ENCODE measurements at regions of chr1 and their contacts with region 1.

Region 1: GRCh38 chr1:149886396-149887195 is 12.8 kb upstream of the BOLA1 start:
- DNase-seq: peak; percentile 88
- H3K4me3 ChIP-seq: peak overlapping the region; percentile 73 to 88
- H3K27ac ChIP-seq: peak overlapping the region; percentile 98 to 100
- H3K4me1 ChIP-seq: peaks cover 8 to 19% of the 10 kb centered on the region in 2 experiments; a peak in 3 of 4 replicates
- H3K27me3 ChIP-seq: no peaks in the 10 kb centered on the region
- CTCF ChIP-seq: no peak
- EP300 ChIP-seq: peak in 1 of 2 experiments; percentile 30; a peak in 1 of 4 replicates
- RAD21 ChIP-seq: no peak

Region 2: GRCh38 chr1:149844101-149844500 is 42.5 kb before region 1 on chr1:
- CTCF ChIA-PET with region 1: interaction called, 5 read pairs
- POLR2A ChIA-PET with region 1: interaction called, 23 read pairs
- DNase-seq: no peak
- H3K4me3 ChIP-seq: peak overlapping the region; percentile 66 to 73
- H3K27ac ChIP-seq: peak overlapping the region; percentile 59 to 87
- H3K4me1 ChIP-seq: peaks cover 11 to 36% of the 10 kb centered on the region in 2 experiments; a peak in 3 of 4 replicates
- H3K27me3 ChIP-seq: no peaks in the 10 kb centered on the region
- CTCF ChIP-seq: no peak
- EP300 ChIP-seq: no peak
- RAD21 ChIP-seq: no peak

Region 3: GRCh38 chr1:149899460-149900293 is 13.1 kb after region 1 on chr1 and contains the start of gene BOLA1:
- CTCF ChIA-PET with region 1: interaction called, 8 read pairs
- POLR2A ChIA-PET with region 1: interaction called, 34 read pairs
- DNase-seq: peak; percentile 91
- H3K4me3 ChIP-seq: peak within 1 kb of the TSS; percentile 57 to 68
- H3K27ac ChIP-seq: peak within 1 kb of the TSS; percentile 67 to 94
- H3K4me1 ChIP-seq: peaks cover 0 to 16% of the 10 kb centered on the region in 2 experiments; a peak in 1 of 4 replicates
- H3K27me3 ChIP-seq: no peaks in the 10 kb centered on the region
- CTCF ChIP-seq: no peak
- EP300 ChIP-seq: no peak
- RAD21 ChIP-seq: no peak
- polyA plus RNA-seq, gene BOLA1: 19.9 and 24.6 TPM in 2 replicates

Region 4: GRCh38 chr1:149927503-149928387 is 41.1 kb after region 1 on chr1 and contains the start of gene SF3B4:
- CTCF ChIA-PET with region 1: interaction called, 6 read pairs
- POLR2A ChIA-PET with region 1: interaction called, 14 read pairs
- DNase-seq: peak; percentile 89
- H3K4me3 ChIP-seq: peak within 1 kb of the TSS; percentile 92 to 95
- H3K27ac ChIP-seq: peak within 1 kb of the TSS; percentile 90 to 99
- H3K4me1 ChIP-seq: peaks cover 14 to 26% of the 10 kb centered on the region in 2 experiments
- H3K27me3 ChIP-seq: no peaks in the 10 kb centered on the region
- CTCF ChIP-seq: no peak
- EP300 ChIP-seq: no peak
- RAD21 ChIP-seq: no peak
- polyA plus RNA-seq, gene SF3B4: 42.4 and 54.3 TPM in 2 replicates

Region 5: GRCh38 chr1:149942207-149942606 is 55.6 kb after region 1 on chr1:
- CTCF ChIA-PET with region 1: interaction called, 33 read pairs
- POLR2A ChIA-PET with region 1: interaction called, 30 read pairs
- DNase-seq: peak; percentile 82
- H3K4me3 ChIP-seq: no peak overlapping the region
- H3K27ac ChIP-seq: peak overlapping the region; percentile 4 to 53; a peak in 3 of 4 replicates
- H3K4me1 ChIP-seq: peaks cover 19 to 25% of the 10 kb centered on the region in 2 experiments
- H3K27me3 ChIP-seq: no peaks in the 10 kb centered on the region
- CTCF ChIP-seq: peak; percentile 43
- EP300 ChIP-seq: no peak
- RAD21 ChIP-seq: peak; percentile 63

Region 6: DNA sequence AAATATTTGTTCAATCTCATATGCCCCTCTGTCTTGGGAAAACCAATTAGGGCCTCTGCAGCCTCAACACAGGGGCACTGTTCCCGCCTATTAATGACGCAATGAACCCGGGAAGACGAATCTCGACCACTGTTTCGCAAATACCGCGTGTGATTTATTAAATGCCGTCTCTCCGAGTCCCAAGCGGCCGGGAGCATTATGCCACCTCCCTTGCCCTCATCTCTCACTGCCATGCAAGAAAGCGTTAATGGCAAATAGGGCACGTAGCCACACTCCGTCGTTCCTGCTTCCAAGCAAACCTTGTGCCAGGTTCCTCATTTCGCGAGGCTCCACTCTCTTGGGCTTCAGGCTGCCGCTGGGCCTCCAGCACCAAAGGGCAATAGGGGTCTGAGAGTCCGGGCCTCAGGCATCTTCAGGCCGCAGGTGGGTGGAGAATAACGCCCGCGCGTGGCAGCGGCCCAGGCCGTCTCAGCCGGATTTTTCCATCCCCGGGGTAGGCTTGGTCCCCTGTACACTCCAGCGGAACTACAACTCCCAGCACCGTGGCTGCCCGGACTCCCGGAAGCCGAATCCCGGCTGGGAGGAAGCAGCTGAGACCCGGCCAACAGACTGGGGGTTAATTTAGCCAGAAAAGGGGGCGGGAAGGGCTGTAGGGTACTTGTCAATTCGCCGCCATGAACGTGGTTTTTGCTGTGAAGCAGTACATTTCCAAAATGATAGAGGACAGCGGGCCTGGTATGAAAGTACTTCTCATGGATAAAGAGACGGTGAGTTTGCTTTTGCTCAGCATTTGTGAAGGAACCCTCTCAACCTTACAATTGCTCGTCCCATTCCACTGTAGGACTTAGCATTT is 180.8 kb after region 1 on chr1 and contains the start of gene VPS45:
- CTCF ChIA-PET with region 1: interaction called, 3 read pairs
- POLR2A ChIA-PET with region 1: interaction called, 14 read pairs
- DNase-seq: peak; percentile 91
- H3K4me3 ChIP-seq: peak within 1 kb of the TSS; percentile 81 to 86
- H3K27ac ChIP-seq: peak within 1 kb of the TSS; percentile 90 to 98
- H3K4me1 ChIP-seq: peaks cover 4 to 21% of the 10 kb centered on the region in 2 experiments; a peak in 3 of 4 replicates
- H3K27me3 ChIP-seq: no peaks in the 10 kb centered on the region
- CTCF ChIP-seq: no peak
- EP300 ChIP-seq: peak in 1 of 2 experiments; percentile 13; a peak in 1 of 4 replicates
- RAD21 ChIP-seq: no peak
- polyA plus RNA-seq, gene VPS45: 31.5 and 48.7 TPM in 2 replicates

Region 7: GRCh38 chr1:150118716-150119115 is 232.1 kb after region 1 on chr1:
- CTCF ChIA-PET with region 1: no interaction called
- POLR2A ChIA-PET with region 1: no interaction called
- DNase-seq: no peak
- H3K4me3 ChIP-seq: no peak overlapping the region
- H3K27ac ChIP-seq: peak overlapping the region in 1 of 2 experiments; percentile 5; a peak in 1 of 4 replicates
- H3K4me1 ChIP-seq: peaks cover 0 to 4% of the 10 kb centered on the region in 2 experiments; a peak in 2 of 4 replicates
- H3K27me3 ChIP-seq: no peaks in the 10 kb centered on the region
- CTCF ChIP-seq: no peak
- EP300 ChIP-seq: no peak
- RAD21 ChIP-seq: no peak

Region 8: DNA sequence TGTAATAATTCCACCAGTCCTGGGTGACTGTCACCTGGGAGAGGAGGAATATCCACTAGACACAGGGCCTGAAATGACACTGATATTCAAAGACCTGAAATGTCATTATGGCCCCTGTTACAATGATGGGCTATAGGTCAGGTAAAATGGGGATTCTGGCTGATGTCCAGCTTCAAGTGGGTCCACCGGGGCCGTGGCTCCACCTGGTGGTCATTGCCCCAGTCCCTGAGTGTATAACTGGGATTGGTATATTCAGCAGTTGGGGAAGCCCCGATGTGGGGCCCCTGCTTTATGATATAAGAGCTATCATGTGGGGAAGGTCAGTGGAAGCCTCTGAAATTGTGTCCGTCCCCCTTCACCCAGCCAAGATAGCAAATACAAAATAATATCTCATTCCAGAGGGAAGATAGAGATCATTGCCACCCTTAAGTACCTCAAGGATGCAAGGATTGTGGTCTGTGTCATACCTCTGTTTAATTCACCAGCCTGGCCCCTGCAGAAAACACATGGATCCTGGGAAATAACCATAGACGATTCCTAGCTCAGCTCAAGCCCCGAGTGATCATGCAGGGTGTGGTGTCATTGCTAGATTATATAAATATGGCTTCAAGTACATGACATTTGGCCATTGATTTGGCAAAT is 282.5 kb after region 1 on chr1:
- CTCF ChIA-PET with region 1: interaction called, 19 read pairs
- POLR2A ChIA-PET with region 1: interaction called, 8 read pairs
- DNase-seq: peak; percentile 84
- H3K4me3 ChIP-seq: no peak overlapping the region; a peak in 1 of 4 replicates
- H3K27ac ChIP-seq: no peak overlapping the region
- H3K4me1 ChIP-seq: peaks cover 0 to 3% of the 10 kb centered on the region in 2 experiments; a peak in 2 of 4 replicates
- H3K27me3 ChIP-seq: no peaks in the 10 kb centered on the region
- CTCF ChIP-seq: peak; percentile 93
- EP300 ChIP-seq: no peak
- RAD21 ChIP-seq: peak; percentile 90

Measured in SK-N-SH (cell line).